AG04449 (cell line): ENCODE measurements at regions of chr7 and their contacts with region 1.

Region 1: DNA sequence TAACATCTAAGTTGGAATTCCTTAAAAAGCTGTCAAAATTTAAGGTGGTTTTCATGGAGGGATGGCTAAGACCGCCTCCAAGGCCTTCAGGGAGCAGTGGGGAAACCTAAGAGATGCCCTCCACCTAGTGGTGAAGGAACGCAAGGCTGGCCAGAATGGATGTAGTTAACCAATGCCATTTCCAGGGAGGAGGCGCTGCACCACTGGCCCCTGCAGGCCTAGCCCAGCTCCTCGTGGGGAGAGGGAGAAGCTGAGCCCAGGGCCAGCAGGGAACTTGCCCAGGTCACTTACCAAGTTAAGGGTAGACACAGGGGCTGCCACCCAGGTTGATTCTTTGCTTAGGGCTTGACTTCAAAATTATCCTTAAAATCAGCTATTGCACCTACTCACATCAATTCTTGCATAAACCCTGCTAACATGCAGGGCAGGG is 32.0 kb downstream of the FIGNL1 start:
- DNase-seq: peak; percentile 21
- H3K4me3 ChIP-seq: no peak overlapping the region
- CTCF ChIP-seq: peak; percentile 98

Region 2: DNA sequence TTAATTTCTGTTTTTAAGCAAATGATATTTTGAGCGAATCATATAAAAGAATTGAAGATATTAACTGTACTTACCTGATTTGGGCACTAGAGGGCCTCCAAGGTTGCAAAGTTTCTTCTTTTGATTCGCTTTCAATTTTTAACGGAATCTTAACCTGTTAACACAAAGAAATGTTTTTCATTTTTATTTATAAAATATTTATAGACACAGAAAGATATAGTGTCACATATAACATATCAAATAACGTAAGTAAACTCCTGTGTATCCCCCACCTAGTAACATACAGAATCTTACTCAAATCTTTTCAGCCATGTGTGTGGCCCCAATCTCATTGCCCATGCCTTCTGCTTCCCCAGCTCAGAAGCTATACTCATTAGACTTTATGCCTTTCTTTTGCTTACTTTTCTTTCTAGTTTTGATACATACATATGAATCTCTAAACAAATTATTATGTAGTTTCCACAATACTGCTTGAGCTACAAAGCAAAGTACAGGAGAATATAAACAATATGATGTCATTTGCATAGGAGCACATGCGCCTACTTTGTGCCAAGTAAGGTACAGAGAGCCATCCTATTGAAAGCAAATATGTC is 275.6 kb before region 1 on chr7:
- CTCF ChIA-PET with region 1: interaction called, 28 read pairs
- POLR2A ChIA-PET with region 1: no interaction called
- DNase-seq: no peak
- H3K4me3 ChIP-seq: no peak overlapping the region
- CTCF ChIP-seq: peak; percentile 52

Region 3: DNA sequence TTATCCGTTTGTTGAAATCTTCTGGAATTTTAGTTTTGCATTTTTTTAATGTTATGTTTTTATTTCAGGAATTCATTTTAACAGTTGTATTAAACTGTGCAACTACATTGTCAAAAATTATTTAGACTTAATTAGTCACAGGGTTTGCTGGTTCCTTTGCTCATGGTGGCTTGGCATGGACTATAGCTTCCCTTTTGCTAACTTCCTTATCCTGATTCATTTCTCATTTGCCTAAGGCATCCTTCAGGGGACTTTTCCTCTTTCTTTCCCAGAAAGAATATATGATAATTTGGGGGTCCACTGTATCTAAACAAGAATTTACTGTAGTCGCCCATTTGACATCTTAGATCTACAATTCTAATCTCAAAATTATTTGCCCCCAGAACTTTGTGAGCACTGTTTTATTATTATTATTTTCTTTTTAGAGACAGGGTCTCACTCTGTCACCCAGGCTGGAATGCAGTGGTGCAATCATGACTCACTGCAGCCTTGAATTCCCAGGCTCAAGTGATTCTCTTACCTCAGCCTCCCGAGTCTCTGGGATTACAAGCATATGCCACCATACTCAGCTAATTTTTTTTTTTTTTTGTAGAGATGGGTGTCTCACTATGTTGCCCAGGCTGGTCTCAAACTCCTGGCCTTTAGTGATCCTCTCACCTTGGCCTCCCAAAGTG is 18.2 kb after region 1 on chr7:
- CTCF ChIA-PET with region 1: interaction called, 32 read pairs
- POLR2A ChIA-PET with region 1: interaction called, 3 read pairs
- DNase-seq: no peak
- H3K4me3 ChIP-seq: no peak overlapping the region
- CTCF ChIP-seq: no peak

Region 4: DNA sequence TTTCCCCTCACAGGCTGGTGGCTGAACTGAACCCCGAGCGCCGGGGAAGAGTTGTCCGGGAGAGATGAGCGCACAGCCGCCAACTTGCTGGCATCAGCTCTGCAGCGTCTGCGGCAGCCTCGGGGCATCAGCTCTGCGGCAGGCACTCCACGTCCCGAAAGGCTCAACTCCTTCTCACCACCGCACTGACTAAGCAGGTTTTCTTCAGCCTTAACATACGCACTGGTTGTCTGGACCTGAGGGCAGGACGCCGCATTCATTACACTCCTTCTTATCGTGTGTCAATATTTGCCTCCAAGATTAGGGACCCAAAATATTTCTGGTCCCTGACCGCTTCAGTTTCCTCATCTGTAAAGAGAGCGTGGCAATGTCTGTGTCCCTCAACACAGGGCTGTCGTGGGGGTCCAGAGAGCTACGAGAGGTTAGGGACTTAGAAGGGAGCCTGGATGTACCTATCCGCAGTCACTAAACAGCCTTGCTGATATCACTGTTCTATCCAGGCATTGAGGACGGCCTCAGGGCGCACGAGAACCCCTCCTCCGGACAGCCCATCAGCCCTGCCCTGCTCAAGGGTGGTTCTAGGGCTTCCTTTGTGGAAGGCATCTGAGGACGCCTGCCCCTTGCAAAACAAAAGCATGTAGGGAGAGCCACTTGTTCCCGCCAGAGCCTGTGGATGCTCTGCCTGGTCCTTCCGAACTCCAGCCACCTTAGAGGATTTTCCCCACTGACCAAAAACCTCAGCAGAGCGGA is 74.8 kb after region 1 on chr7:
- CTCF ChIA-PET with region 1: no interaction called
- POLR2A ChIA-PET with region 1: no interaction called
- DNase-seq: no peak
- H3K4me3 ChIP-seq: no peak overlapping the region
- CTCF ChIP-seq: no peak